Sigmoid colon (tissue), 7 donors: ENCODE measurements at regions of chr12 and their contacts with region 1.

Region 1: DNA sequence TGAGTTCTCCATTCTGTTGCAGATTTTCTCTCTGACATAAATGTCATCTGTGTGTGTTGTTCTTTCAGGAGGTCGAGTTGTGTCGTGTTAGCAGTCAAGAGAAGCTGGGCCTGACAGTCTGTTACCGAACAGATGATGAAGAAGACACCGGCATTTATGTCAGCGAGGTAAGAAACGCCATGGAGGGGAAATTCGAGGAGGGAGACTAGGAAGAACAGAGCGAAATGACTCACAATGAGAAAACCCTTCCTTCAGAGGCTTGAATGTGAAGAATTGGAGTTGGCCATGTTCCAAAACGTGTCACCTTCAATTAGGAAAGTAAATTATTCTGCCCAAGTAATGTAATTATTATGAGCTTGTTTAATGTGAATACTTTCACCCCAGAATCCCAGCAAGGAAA is 364.5 kb downstream of the PDZRN4 start:
- DNase-seq: no peak
- H3K4me3 ChIP-seq: no peak overlapping the region
- H3K27ac ChIP-seq: no peak overlapping the region
- H3K4me1 ChIP-seq: no peaks in the 10 kb centered on the region
- H3K27me3 ChIP-seq: no peaks in the 10 kb centered on the region
- CTCF ChIP-seq: no peak
- EP300 ChIP-seq: no peak
- POLR2A ChIP-seq: no peak

Region 2: GRCh38 chr12:41466802-41467201 is 85.8 kb before region 1 on chr12:
- intact Hi-C with region 1: loop called (anchors 5 kb)
- DNase-seq: no peak
- H3K4me3 ChIP-seq: no peak overlapping the region
- H3K27ac ChIP-seq: no peak overlapping the region
- H3K4me1 ChIP-seq: peaks cover 0 to 20% (median 2%) of the 10 kb centered on the region in 4 donors
- H3K27me3 ChIP-seq: no peaks in the 10 kb centered on the region
- CTCF ChIP-seq: no peak
- EP300 ChIP-seq: no peak
- POLR2A ChIP-seq: no peak